Activated naive CD4-positive, alpha-beta T cell treated with anti-CD3 and anti-CD28 coated beads for 36 hours (primary cell): ENCODE measurements at regions of chr12 and their contacts with region 1.

Region 1: DNA sequence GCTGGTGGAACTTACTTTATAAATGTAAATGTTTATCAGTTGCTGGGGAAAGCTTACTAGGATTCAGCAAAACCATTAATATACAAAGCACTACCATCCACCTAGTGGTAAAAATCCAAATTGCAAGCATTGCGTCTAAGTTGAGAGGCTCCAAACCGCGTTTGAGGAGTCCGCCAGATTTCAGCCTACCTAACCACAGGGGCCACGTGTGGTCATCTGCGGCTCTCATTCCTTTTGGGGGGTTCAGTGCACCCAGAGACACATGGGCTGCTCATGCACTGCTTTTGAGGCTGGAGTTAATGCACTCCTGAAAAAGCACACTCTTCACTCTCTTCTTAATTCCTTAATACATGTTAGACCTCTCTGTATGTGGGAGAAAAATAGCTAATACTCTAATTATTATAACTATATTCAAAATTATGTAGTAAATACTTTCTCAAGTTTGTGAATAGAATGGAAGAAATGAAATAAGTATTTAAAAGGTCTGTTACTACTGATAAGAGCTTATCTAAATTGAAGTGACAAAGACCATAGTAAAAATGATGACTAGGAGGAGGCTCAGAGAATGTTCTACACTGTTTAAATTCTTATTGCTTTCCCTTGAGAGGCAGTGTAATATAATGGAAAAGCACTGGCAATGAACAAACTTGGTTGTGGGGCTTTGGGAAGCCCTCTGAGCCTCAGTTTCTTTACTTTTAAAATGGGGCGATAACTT is 41.4 kb upstream of the MANSC4 start:
- DNase-seq: peak; percentile 49
- H3K4me3 Mint-ChIP-seq: no peak overlapping the region
- H3K27ac Mint-ChIP-seq: peak overlapping the region; percentile 88
- H3K4me1 Mint-ChIP-seq: peaks cover 43% of the 10 kb centered on the region
- H3K27me3 Mint-ChIP-seq: peaks cover 30% of the 10 kb centered on the region

Region 2: GRCh38 chr12:26274441-26275312 is 1546.7 kb before region 1 on chr12:
- CTCF ChIA-PET with region 1: no interaction called
- intact Hi-C with region 1: loop called (anchors 5 kb)
- DNase-seq: peak; percentile 76
- H3K4me3 Mint-ChIP-seq: no peak overlapping the region
- H3K27ac Mint-ChIP-seq: no peak overlapping the region
- H3K4me1 Mint-ChIP-seq: peaks cover 8% of the 10 kb centered on the region
- H3K27me3 Mint-ChIP-seq: no peaks in the 10 kb centered on the region

Region 3: DNA sequence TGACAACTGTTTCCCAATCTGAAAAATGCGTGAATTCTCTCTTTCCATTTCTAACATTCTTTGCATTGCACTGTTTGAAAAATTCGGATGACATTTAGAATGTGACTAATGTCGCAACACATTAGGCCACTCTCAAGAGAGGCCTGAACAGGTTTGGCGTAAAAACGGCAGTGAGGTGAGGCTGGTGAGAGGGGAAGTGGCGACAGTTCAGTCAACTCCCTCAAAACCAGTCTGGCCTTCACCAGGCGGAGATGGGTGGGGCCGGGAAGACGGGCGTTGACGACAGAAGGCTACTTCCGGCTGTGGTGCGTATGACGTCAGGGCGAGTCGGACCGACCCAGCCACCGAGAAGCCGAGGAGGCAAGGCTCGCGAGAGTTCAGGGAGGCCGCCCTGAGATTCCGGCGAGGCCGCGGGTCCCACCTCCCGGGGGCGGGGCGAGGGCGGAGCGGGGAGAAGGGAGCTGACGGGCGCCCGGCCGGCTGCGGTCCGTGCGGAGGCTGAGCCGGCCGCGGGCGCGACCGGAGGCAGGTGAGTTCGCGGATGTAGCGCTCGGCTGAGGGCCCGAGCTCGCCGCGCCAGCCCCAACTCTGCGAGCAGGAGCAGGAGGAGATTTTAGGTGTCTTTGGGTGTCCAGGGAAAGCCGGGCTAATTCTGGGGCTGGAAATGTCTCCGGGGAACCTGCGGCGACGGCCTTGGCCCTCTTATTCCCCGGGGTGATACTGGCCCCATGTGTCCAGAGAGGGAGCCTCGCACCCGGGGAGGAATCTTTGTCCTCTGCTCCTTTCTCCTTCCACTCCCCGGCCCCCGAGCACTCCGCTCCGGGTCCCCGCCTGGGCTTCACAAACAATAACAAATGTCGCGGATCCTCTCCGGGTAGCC is 577.4 kb before region 1 on chr12 and contains the start of gene STK38L:
- CTCF ChIA-PET with region 1: no interaction called
- intact Hi-C with region 1: loop called (anchors 1 kb)
- DNase-seq: peak; percentile 98
- H3K4me3 Mint-ChIP-seq: peak within 1 kb of the TSS; percentile 98
- H3K27ac Mint-ChIP-seq: peak within 1 kb of the TSS; percentile 91
- H3K4me1 Mint-ChIP-seq: peaks cover 47% of the 10 kb centered on the region
- H3K27me3 Mint-ChIP-seq: no peaks in the 10 kb centered on the region
- total RNA-seq, gene STK38L: 21.3 to 21.4 TPM

Region 4: GRCh38 chr12:27733052-27733656 is 88.3 kb before region 1 on chr12:
- CTCF ChIA-PET with region 1: interaction called, 37 read pairs
- intact Hi-C with region 1: loop called (anchors 1 kb)
- DNase-seq: peak; percentile 60
- H3K4me3 Mint-ChIP-seq: no peak overlapping the region
- H3K27ac Mint-ChIP-seq: no peak overlapping the region
- H3K4me1 Mint-ChIP-seq: no peaks in the 10 kb centered on the region
- H3K27me3 Mint-ChIP-seq: no peaks in the 10 kb centered on the region

Region 5: DNA sequence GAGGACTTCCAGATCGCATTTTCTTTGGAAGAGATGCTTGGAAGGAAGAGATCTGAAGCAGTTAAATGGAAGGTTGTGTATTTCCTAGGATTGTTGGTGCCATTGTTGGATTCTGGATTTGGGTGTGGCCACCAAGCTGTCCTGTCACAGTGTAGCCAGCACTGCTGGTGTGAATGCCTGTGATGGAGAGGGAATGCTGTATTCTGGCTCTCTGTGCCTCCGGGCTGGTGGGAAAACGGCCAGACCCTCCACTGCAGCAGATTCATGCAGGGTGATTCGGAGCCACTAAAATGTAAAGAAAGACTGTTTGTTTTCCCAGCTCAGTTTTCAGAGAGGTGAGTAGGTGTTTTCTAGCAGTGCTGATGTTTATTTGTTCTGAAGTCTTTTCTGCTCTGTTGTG is 10.7 kb before region 1 on chr12:
- CTCF ChIA-PET with region 1: interaction called, 29 read pairs
- intact Hi-C with region 1: no loop called
- DNase-seq: no peak
- H3K4me3 Mint-ChIP-seq: no peak overlapping the region
- H3K27ac Mint-ChIP-seq: no peak overlapping the region
- H3K4me1 Mint-ChIP-seq: peaks cover 43% of the 10 kb centered on the region
- H3K27me3 Mint-ChIP-seq: peaks cover 9% of the 10 kb centered on the region

Region 6: DNA sequence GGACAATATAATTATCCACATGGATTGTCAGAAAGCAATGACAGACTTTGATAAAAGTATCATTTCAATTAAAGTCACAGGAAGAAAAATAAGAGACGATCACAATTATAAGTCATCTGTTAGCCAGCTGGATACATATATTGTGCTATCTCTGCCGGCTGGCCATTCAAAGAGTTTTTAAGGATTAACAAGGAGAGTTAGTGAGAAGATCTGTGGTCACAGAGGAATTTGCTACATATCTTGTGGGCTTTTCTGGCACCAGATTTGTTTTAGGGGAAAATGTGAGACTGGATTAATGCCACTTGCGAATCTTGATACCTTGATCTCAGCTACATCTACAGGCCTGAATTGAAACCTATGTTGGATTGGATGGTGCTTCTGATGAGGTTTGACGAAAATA is 49.5 kb after region 1 on chr12:
- CTCF ChIA-PET with region 1: no interaction called
- intact Hi-C with region 1: no loop called
- DNase-seq: no peak
- H3K4me3 Mint-ChIP-seq: no peak overlapping the region
- H3K27ac Mint-ChIP-seq: no peak overlapping the region
- H3K4me1 Mint-ChIP-seq: peaks cover 12% of the 10 kb centered on the region
- H3K27me3 Mint-ChIP-seq: peaks cover 2% of the 10 kb centered on the region

Region 7: GRCh38 chr12:28079539-28079938 is 258.1 kb after region 1 on chr12:
- CTCF ChIA-PET with region 1: interaction called, 3 read pairs
- intact Hi-C with region 1: loop called (anchors 1 kb)
- DNase-seq: no peak
- H3K4me3 Mint-ChIP-seq: no peak overlapping the region
- H3K27ac Mint-ChIP-seq: no peak overlapping the region
- H3K4me1 Mint-ChIP-seq: peaks cover 8% of the 10 kb centered on the region
- H3K27me3 Mint-ChIP-seq: peaks cover 8% of the 10 kb centered on the region

Region 8: DNA sequence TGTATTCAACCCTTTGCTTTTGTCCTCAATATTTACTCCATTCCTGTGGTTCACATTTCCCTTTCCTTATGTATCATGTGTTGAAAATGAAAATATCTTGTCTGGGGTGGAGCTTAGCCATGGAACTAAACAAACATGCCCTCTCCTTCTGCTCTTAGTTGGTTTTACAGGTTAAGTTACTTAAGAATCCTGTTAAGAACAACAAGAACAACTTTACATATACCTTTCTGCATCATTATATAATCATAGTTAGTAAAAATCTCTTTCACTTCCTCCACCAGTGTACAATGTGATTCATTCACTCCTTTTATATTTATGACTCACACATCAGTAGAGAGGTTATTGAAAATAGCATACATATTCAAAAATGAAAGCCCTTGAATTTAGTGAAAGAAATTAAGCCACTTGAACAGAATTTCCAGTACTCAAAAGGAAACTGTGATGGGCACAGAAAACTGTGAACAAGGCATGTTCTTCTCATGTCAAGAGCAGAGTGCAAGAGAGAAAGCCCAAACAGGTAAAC is 676.5 kb after region 1 on chr12:
- CTCF ChIA-PET with region 1: no interaction called
- intact Hi-C with region 1: loop called (anchors 1 kb)
- DNase-seq: peak; percentile 10
- H3K4me3 Mint-ChIP-seq: no peak overlapping the region
- H3K27ac Mint-ChIP-seq: peak overlapping the region; percentile 46
- H3K4me1 Mint-ChIP-seq: peaks cover 18% of the 10 kb centered on the region
- H3K27me3 Mint-ChIP-seq: no peaks in the 10 kb centered on the region